ENCODE measurements at regions of chr15 and their contacts with region 1.

Region 1: DNA sequence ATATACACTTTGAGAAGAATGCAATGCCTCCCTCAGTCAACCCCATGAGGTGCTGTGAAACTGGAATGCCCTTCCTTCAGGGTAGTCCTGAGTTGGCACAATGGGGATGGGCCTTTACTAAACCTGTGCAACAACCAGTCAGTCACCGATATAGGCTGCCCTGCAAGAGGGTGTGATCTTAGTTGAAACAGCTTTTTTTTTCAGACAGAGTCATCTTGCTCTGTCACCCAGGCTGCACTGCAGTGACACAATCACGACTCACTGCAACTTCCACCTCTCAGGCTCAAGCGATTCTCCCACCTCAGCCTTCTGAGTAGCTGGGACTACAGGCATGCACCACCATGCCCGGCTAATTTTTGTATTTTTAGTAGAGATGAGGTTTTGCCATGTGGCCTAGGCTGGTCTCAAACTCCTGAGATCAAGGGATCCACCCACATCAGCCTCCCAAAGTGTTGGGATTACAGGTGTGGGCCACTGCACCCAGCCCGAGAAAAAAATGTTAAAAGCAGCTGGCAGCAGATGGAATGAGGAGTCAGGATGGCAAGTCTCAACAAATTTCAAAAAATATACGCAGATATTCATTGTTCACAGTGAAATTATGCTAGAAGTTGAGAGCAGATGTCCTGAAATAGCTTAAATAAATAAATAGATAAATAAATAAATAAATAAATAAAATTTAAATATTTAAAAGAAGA is 31.8 kb downstream of the MYO5A start:
- DNase-seq: peak; percentile 86
- H3K4me3 ChIP-seq: no peak overlapping the region
- H3K27ac ChIP-seq: peak overlapping the region; percentile 57
- H3K4me1 ChIP-seq: peaks cover 23% of the 10 kb centered on the region
- H3K27me3 ChIP-seq: no peaks in the 10 kb centered on the region
- CTCF ChIP-seq: no peak

Region 2: DNA sequence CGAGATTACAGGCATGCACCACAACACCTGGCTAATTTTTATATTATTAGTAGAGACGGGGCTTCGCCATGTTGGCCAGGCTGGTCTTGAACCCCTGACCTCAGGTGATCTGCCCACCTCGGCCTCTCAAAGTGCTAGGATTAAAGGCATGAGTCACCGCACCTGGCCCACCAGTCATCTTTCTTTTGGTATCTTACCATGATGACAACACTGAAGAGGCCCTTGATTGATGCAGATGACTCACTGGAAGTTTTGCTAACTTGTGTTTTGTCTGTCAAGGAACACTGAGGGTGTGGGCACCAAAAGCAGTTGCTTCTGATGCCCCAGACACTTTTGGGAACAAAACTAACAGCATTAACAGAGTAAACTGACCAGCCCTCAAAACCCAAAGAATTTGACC is 56.5 kb before region 1 on chr15:
- CTCF ChIA-PET with region 1: no interaction called
- dilution Hi-C with region 1: no loop called
- in situ Hi-C with region 1: no loop called
- intact Hi-C with region 1: loop called (anchors 5 kb)
- DNase-seq: peak; percentile 86
- H3K4me3 ChIP-seq: no peak overlapping the region
- H3K27ac ChIP-seq: no peak overlapping the region
- H3K4me1 ChIP-seq: peaks cover 12% of the 10 kb centered on the region
- H3K27me3 ChIP-seq: no peaks in the 10 kb centered on the region
- CTCF ChIP-seq: no peak

Region 3: DNA sequence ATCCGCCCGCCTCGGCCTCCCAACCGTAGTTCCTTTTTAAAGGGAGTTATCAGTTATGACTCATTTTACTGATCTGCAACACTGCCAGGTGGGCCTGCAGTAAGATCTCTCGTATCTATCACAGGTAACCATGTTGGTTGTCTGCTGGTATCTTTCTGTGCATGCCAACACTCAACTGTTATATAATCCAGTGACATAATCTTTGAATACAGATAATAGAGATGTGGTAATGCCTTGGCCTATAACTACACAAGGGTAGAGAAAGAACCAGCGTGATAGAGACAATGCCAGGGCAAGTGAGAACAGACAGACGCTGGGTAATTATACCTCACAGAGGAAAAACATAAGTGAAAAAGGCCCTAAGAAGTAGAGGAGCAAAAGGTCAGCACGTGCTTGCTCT is 82.9 kb after region 1 on chr15:
- CTCF ChIA-PET with region 1: no interaction called
- dilution Hi-C with region 1: no loop called
- in situ Hi-C with region 1: no loop called
- intact Hi-C with region 1: no loop called
- DNase-seq: no peak
- H3K4me3 ChIP-seq: no peak overlapping the region
- H3K27ac ChIP-seq: no peak overlapping the region
- H3K4me1 ChIP-seq: no peaks in the 10 kb centered on the region
- H3K27me3 ChIP-seq: no peaks in the 10 kb centered on the region
- CTCF ChIP-seq: no peak